ENCODE measurements at regions of chrX and their contacts with region 1.

Region 1: DNA sequence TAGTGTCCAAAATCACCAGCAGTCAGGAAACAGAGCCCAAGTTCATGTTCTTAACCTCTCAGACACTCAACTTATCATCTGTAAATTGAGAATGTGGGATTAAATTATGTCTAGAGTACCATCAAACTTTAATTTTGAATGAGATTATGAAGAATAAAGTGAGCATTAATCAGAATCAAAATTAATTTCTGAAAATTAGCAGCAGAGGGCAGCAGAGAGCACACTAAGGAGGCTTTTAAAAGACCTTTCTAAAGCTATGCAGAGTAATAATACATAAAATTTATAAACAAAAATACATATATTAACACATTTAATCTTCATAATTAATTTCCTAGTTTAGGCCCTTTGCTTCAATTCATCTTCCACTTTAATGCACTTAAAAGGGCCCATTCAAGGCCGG is 7.1 kb downstream of the TASL start:
- DNase-seq: peak in 2 of 35 experiments; percentile 2 to 64
- ATAC-seq: no peak
- H3K4me3 ChIP-seq: no peak overlapping the region
- H3K4me3 Mint-ChIP-seq: no peak overlapping the region
- H3K27ac ChIP-seq: no peak overlapping the region
- H3K27ac Mint-ChIP-seq: no peak overlapping the region
- H3K4me1 ChIP-seq: no peaks in the 10 kb centered on the region
- H3K4me1 Mint-ChIP-seq: peaks cover 5 to 27% (median 6%) of the 10 kb centered on the region in 3 donors
- H3K27me3 ChIP-seq: no peaks in the 10 kb centered on the region
- H3K27me3 Mint-ChIP-seq: no peaks in the 10 kb centered on the region

Region 2: DNA sequence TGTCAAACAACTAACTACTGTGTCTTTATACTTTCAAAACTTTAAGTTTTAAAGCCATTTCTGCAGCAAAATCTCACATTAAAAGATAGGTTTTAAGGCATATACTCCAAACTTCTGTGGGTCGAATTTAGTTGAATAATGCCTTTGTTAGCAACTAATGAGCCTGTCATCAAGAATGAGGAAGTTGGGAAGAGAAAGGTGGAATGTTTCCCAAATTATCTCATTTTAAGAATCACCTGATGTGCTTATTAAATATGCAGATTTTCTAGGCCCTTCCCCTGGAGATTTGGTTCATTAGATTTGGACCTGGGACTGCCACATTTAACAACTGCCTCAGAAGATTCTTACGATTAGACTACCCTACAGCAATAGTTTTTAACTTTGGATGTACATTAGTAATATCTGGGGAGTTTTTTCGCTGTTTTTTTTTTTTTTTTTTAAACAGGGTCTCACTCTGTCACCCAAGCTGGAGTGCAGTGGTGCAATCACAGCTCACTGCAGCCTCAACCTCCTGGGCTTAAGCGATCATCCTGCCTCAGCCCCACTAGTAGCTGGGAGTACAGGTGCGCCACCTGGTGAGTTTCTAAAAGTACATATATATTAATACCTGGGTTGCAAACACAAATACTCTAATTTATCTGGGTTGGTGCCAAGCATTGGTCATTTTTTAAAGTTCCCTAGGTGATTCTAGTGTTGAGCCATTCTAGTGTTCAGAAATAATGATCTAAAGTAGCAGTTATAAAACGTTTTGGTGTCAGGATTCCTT is 23.1 kb after region 1 on chrX:
- CTCF ChIA-PET with region 1: interaction called, 10 to 11 read pairs
- POLR2A ChIA-PET with region 1: no interaction called
- DNase-seq: peak in 20 of 35 experiments; percentile 1 to 51 (median 13)
- ATAC-seq: peak in 2 of 4 experiments; percentile 45 to 46
- H3K4me3 ChIP-seq: no peak overlapping the region
- H3K4me3 Mint-ChIP-seq: no peak overlapping the region
- H3K27ac ChIP-seq: no peak overlapping the region
- H3K27ac Mint-ChIP-seq: no peak overlapping the region
- H3K4me1 ChIP-seq: peaks cover 0 to 3% of the 10 kb centered on the region in 2 experiments
- H3K4me1 Mint-ChIP-seq: peaks cover 0 to 14% (median 4%) of the 10 kb centered on the region in 3 donors
- H3K27me3 ChIP-seq: no peaks in the 10 kb centered on the region
- H3K27me3 Mint-ChIP-seq: peaks cover 1 to 33% of the 10 kb centered on the region in 2 donors

Region 3: DNA sequence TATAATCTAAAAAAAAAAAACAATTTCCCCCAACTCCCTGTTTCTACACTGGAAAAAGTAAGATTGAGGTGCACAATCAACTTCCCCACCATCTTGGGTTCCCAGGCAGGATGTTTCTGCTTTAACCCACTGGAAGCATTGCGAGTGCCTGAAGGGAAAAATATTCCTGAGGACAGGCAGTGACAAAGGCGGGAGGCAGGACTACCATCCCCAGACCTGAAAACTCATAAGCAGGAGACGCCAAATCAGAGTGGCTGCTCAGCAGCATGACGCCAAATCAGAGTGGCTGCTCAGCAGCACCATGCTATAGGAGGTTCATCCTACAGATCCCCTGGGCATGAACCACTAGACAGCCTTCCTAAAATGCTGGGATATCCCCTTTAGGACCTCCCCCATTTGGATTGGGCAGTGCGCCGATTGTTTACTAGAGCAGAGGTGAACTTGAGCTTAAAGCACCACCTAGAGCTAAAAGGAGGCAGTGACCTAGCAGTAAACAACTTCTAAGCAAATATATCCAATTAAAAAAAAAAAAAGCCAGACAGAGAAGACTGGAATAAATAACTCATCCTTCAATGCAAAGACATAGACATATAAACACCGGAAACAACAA is 47.8 kb after region 1 on chrX:
- CTCF ChIA-PET with region 1: no interaction called
- POLR2A ChIA-PET with region 1: no interaction called
- DNase-seq: no peak
- ATAC-seq: no peak
- H3K4me3 ChIP-seq: no peak overlapping the region
- H3K4me3 Mint-ChIP-seq: no peak overlapping the region
- H3K27ac ChIP-seq: no peak overlapping the region
- H3K27ac Mint-ChIP-seq: no peak overlapping the region
- H3K4me1 ChIP-seq: no peaks in the 10 kb centered on the region
- H3K4me1 Mint-ChIP-seq: no peaks in the 10 kb centered on the region
- H3K27me3 ChIP-seq: no peaks in the 10 kb centered on the region
- H3K27me3 Mint-ChIP-seq: peaks cover 0 to 6% of the 10 kb centered on the region in 2 donors

Region 4: GRCh38 chrX:30910124-30910860 is 339.8 kb after region 1 on chrX:
- CTCF ChIA-PET with region 1: no interaction called
- POLR2A ChIA-PET with region 1: no interaction called
- DNase-seq: peak in 12 of 35 experiments; percentile 0 to 25 (median 7)
- ATAC-seq: peak in 1 of 4 experiments; percentile 52
- H3K4me3 ChIP-seq: no peak overlapping the region
- H3K4me3 Mint-ChIP-seq: no peak overlapping the region
- H3K27ac ChIP-seq: no peak overlapping the region
- H3K27ac Mint-ChIP-seq: peak overlapping the region; percentile 45 to 57
- H3K4me1 ChIP-seq: peaks cover 0 to 2% of the 10 kb centered on the region in 2 experiments
- H3K4me1 Mint-ChIP-seq: peaks cover 5 to 7% (median 6%) of the 10 kb centered on the region in 3 donors
- H3K27me3 ChIP-seq: no peaks in the 10 kb centered on the region
- H3K27me3 Mint-ChIP-seq: peaks cover 0 to 9% of the 10 kb centered on the region in 2 donors